ENCODE measurements at regions of chr6 and their contacts with region 1.

Region 1: GRCh38 chr6:167093922-167094432 is 28.9 kb upstream of the CCR6 start:
- DNase-seq: peak; percentile 84
- ATAC-seq: peak; percentile 48
- H3K4me3 Mint-ChIP-seq: peak overlapping the region; percentile 94
- H3K27ac Mint-ChIP-seq: peak overlapping the region; percentile 100
- H3K4me1 Mint-ChIP-seq: peaks cover 100% of the 10 kb centered on the region
- H3K27me3 Mint-ChIP-seq: no peaks in the 10 kb centered on the region
- CTCF ChIP-seq: no peak

Region 2: GRCh38 chr6:166342349-166343149 is 751.4 kb before region 1 on chr6 and contains the start of gene SFT2D1:
- CTCF ChIA-PET with region 1: no interaction called
- POLR2A ChIA-PET with region 1: interaction called, 7 read pairs
- intact Hi-C with region 1: loop called (anchors 1 kb)
- DNase-seq: peak; percentile 84
- ATAC-seq: peak; percentile 77
- H3K4me3 Mint-ChIP-seq: peak within 1 kb of the TSS; percentile 92
- H3K27ac Mint-ChIP-seq: peak within 1 kb of the TSS; percentile 89
- H3K4me1 Mint-ChIP-seq: peaks cover 16% of the 10 kb centered on the region
- H3K27me3 Mint-ChIP-seq: no peaks in the 10 kb centered on the region
- CTCF ChIP-seq: no peak
- total RNA-seq, gene SFT2D1: 44.6 and 49.5 TPM in 2 replicates

Region 3: GRCh38 chr6:167047554-167047953 is 46.4 kb before region 1 on chr6:
- CTCF ChIA-PET with region 1: interaction called, 4 read pairs
- POLR2A ChIA-PET with region 1: interaction called, 77 read pairs
- intact Hi-C with region 1: loop called (anchors 1 kb)
- DNase-seq: peak; percentile 36
- ATAC-seq: peak; percentile 85
- H3K4me3 Mint-ChIP-seq: peak overlapping the region; percentile 76
- H3K27ac Mint-ChIP-seq: peak overlapping the region; percentile 96
- H3K4me1 Mint-ChIP-seq: peaks cover 68% of the 10 kb centered on the region
- H3K27me3 Mint-ChIP-seq: no peaks in the 10 kb centered on the region
- CTCF ChIP-seq: no peak

Region 4: DNA sequence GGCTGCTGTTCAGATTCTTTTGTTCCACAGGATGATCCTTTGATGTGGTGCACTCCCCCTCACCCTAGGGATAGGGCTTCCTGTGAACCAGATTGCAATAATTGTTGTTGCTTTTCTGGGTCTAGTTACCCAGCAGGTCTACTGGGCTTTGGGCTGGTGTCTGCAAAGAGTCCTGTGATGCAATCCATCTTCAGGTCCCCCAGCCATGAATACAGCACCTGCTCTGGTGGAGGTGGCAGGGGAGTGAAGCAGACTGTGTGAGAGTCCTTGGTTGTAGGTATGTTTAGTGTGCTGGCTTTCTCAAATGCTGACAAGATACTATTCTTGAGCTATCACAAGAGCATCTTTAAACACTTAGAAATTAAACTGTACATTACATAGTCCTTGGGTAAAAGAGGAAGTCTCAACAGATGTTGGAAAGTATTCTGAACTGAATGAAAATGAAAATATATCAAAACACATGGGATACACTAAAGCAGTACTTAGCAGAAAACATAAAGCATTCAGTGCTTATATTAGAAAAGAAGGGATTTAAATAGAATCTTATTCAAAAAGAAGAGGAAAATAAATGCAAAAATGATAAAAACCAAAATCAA is 20.2 kb before region 1 on chr6:
- CTCF ChIA-PET with region 1: interaction called, 3 read pairs
- POLR2A ChIA-PET with region 1: interaction called, 51 read pairs
- intact Hi-C with region 1: no loop called
- DNase-seq: no peak
- ATAC-seq: peak; percentile 71
- H3K4me3 Mint-ChIP-seq: no peak overlapping the region
- H3K27ac Mint-ChIP-seq: peak overlapping the region; percentile 48
- H3K4me1 Mint-ChIP-seq: peaks cover 44% of the 10 kb centered on the region
- H3K27me3 Mint-ChIP-seq: no peaks in the 10 kb centered on the region
- CTCF ChIP-seq: no peak

Region 5: DNA sequence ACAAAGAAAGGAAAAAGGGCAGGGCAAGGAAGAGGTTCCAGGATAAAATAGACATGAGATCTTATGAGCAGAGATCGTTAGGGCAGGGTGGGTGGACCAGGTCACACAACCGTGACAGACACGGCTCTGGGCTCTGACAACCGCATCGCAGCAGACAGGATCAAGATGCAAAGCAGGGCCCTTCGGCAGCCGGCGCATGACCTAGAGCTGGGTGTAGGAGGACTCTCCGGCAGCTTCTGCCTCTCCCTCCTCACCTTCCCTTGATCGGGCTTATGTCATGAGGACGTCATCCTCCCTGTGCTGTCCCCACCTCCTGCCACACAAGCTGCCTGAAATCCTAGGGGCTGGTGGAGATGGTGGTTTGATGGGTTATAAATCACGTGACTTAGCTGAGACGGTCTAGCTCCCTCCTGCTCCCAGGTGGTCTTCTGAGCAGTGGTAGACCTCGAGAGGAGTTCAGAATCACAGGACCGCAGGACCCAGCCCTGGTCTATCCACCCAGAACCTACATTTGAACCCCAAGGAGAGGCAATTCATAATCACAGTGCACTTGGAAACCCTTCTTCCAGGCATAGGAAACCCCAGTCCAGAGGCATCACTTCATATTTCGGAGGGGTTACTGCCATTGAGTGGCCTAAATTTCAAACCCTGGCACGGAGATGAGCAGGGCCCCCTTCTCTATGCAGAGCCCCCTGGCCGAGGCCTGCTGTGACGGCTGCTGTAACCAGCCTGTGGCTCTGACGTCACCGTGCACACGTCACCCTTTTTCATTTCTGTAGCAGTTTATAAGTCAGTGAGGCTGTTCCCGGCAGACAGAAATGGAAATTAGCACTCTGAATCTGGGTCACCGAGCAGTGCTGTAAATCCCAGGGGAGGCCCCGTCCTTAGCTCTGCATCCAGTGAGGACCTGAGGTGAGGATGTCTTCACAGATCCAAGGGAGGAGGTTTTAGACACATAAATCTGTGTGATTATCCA is 20.2 kb after region 1 on chr6:
- CTCF ChIA-PET with region 1: interaction called, 18 read pairs
- POLR2A ChIA-PET with region 1: interaction called, 970 read pairs
- intact Hi-C with region 1: loop called (anchors 1 kb)
- DNase-seq: peak; percentile 75
- ATAC-seq: peak; percentile 78
- H3K4me3 Mint-ChIP-seq: peak overlapping the region; percentile 84
- H3K27ac Mint-ChIP-seq: peak overlapping the region; percentile 94
- H3K4me1 Mint-ChIP-seq: peaks cover 96% of the 10 kb centered on the region
- H3K27me3 Mint-ChIP-seq: no peaks in the 10 kb centered on the region
- CTCF ChIP-seq: no peak

Region 6: GRCh38 chr6:167130008-167130677 is 36.2 kb after region 1 on chr6:
- CTCF ChIA-PET with region 1: interaction called, 44 read pairs
- POLR2A ChIA-PET with region 1: interaction called, 970 read pairs
- intact Hi-C with region 1: loop called (anchors 1 kb)
- DNase-seq: no peak
- ATAC-seq: peak; percentile 18
- H3K4me3 Mint-ChIP-seq: peak overlapping the region; percentile 55
- H3K27ac Mint-ChIP-seq: peak overlapping the region; percentile 95
- H3K4me1 Mint-ChIP-seq: peaks cover 91% of the 10 kb centered on the region
- H3K27me3 Mint-ChIP-seq: no peaks in the 10 kb centered on the region
- CTCF ChIP-seq: no peak

Region 7: GRCh38 chr6:167153521-167153959 is 59.6 kb after region 1 on chr6:
- CTCF ChIA-PET with region 1: interaction called, 4 read pairs
- POLR2A ChIA-PET with region 1: interaction called, 28 read pairs
- intact Hi-C with region 1: no loop called
- DNase-seq: no peak
- ATAC-seq: peak; percentile 62
- H3K4me3 Mint-ChIP-seq: peak overlapping the region; percentile 88
- H3K27ac Mint-ChIP-seq: peak overlapping the region; percentile 88
- H3K4me1 Mint-ChIP-seq: peaks cover 58% of the 10 kb centered on the region
- H3K27me3 Mint-ChIP-seq: no peaks in the 10 kb centered on the region
- CTCF ChIP-seq: no peak